ENCODE measurements at regions of chr12 and their contacts with region 1.

Region 1: GRCh38 chr12:104201238-104202001 is 14.2 kb upstream of the TXNRD1 start:
- DNase-seq: no peak
- H3K4me3 ChIP-seq: no peak overlapping the region
- H3K27ac ChIP-seq: no peak overlapping the region
- H3K4me1 ChIP-seq: peaks cover 3% of the 10 kb centered on the region
- H3K27me3 ChIP-seq: peaks cover 5% of the 10 kb centered on the region
- CTCF ChIP-seq: peak; percentile 89

Region 2: DNA sequence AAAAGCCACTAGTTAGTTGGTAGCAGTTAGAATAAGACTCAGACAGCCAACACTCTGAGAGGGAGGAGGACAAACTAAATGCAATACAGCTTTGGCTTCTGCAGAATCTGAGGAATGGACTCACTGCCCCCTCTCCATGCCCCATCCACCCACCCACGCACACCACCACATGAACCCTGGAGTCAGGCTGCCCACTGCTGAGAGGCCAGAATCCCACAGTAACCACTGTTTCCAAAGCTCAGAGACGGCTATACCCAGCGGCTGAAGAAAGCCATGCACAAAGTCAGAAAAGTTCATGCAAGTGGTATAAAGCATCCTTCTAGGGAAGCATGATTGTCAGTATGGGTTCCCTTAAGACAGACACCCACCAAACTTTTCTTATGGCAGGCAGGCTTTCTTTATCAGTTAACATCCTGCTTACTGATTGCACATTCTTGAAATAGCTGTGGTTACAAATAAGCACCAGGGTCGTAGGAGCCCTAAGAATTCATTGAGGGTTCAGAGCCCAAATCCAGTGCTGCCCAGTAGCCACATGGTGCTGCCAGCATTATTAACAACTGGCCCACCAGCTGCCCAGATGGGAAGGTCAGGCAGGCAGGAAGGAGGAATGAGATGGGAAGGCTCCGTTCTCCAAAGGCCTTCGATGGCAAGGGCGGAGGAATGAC is 421.9 kb before region 1 on chr12:
- intact Hi-C with region 1: no loop called
- DNase-seq: no peak
- H3K4me3 ChIP-seq: no peak overlapping the region
- H3K27ac ChIP-seq: no peak overlapping the region
- H3K4me1 ChIP-seq: peaks cover 6% of the 10 kb centered on the region
- H3K27me3 ChIP-seq: no peaks in the 10 kb centered on the region
- CTCF ChIP-seq: no peak

Region 3: DNA sequence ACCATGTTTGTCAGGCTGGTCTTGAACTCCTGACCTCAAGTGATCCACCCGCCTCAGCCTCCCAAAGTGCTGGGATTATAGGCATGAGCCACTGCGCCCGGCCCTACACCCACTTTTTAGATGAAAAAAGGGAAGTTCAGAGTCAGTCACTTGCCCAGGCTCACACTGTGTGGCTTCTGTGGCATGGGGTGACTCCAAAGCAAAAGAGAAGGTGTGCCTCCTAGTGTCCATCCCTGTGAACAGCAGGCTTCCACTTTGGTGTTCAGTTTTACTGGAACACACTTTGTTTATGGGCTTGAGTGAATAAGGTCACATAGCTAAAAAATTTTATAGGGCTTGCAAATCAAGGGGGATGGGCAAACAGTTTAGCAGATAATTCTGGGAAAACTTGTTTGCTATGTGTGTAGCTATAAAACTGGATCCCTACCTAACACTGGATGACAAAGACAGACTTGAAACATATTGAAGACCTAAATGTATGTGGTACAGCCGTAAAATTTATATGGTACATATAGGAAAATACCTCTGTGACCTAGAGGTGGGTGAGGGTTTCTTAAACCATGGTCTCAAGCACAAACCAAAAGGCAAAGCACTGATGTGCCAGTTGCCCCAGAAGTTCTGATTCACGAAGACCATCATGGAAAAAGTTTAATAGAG is 157.1 kb after region 1 on chr12:
- intact Hi-C with region 1: loop called (anchors 5 kb)
- DNase-seq: peak; percentile 44
- H3K4me3 ChIP-seq: no peak overlapping the region
- H3K27ac ChIP-seq: no peak overlapping the region
- H3K4me1 ChIP-seq: no peaks in the 10 kb centered on the region
- H3K27me3 ChIP-seq: no peaks in the 10 kb centered on the region
- CTCF ChIP-seq: peak; percentile 92